Activated CD4-positive, alpha-beta T cell treated with anti-CD3 and anti-CD28 coated beads for 36 hours (primary cell): ENCODE measurements at regions of chr1 and their contacts with region 1.

Region 1: GRCh38 chr1:113072757-113073478 is at the start of gene LRIG2:
- DNase-seq: peak; percentile 99
- ATAC-seq: peak; percentile 98
- H3K4me3 Mint-ChIP-seq: peak within 1 kb of the TSS; percentile 98
- H3K27ac Mint-ChIP-seq: peak within 1 kb of the TSS; percentile 90
- H3K4me1 Mint-ChIP-seq: peaks cover 29% of the 10 kb centered on the region
- H3K27me3 Mint-ChIP-seq: no peaks in the 10 kb centered on the region
- total RNA-seq, gene LRIG2: 7.1 to 10.2 TPM

Region 2: GRCh38 chr1:112809253-112809684 is 263.6 kb before region 1 on chr1:
- CTCF ChIA-PET with region 1: interaction called, 5 read pairs
- POLR2A ChIA-PET with region 1: no interaction called
- intact Hi-C with region 1: loop called in 1 of 2 experiments (anchors 2 kb)
- DNase-seq: peak; percentile 85
- ATAC-seq: peak; percentile 93
- H3K4me3 Mint-ChIP-seq: no peak overlapping the region
- H3K27ac Mint-ChIP-seq: no peak overlapping the region
- H3K4me1 Mint-ChIP-seq: no peaks in the 10 kb centered on the region
- H3K27me3 Mint-ChIP-seq: peaks cover 5% of the 10 kb centered on the region

Region 3: GRCh38 chr1:112955781-112956543 is 117.0 kb before region 1 on chr1 and contains the start of gene SLC16A1:
- CTCF ChIA-PET with region 1: interaction called, 10 read pairs
- POLR2A ChIA-PET with region 1: interaction called, 8 read pairs
- intact Hi-C with region 1: loop called (anchors 2 kb)
- DNase-seq: peak; percentile 96
- ATAC-seq: peak; percentile 75
- H3K4me3 Mint-ChIP-seq: peak within 1 kb of the TSS; percentile 97
- H3K27ac Mint-ChIP-seq: peak within 1 kb of the TSS; percentile 100
- H3K4me1 Mint-ChIP-seq: peaks cover 56% of the 10 kb centered on the region
- H3K27me3 Mint-ChIP-seq: no peaks in the 10 kb centered on the region
- total RNA-seq, gene SLC16A1: 70.0 to 70.4 TPM

Region 4: GRCh38 chr1:113095790-113096455 is 23.0 kb after region 1 on chr1:
- CTCF ChIA-PET with region 1: interaction called, 21 read pairs
- POLR2A ChIA-PET with region 1: no interaction called
- intact Hi-C with region 1: no loop called
- DNase-seq: no peak
- ATAC-seq: no peak
- H3K4me3 Mint-ChIP-seq: no peak overlapping the region
- H3K27ac Mint-ChIP-seq: no peak overlapping the region
- H3K4me1 Mint-ChIP-seq: no peaks in the 10 kb centered on the region
- H3K27me3 Mint-ChIP-seq: no peaks in the 10 kb centered on the region

Region 5: DNA sequence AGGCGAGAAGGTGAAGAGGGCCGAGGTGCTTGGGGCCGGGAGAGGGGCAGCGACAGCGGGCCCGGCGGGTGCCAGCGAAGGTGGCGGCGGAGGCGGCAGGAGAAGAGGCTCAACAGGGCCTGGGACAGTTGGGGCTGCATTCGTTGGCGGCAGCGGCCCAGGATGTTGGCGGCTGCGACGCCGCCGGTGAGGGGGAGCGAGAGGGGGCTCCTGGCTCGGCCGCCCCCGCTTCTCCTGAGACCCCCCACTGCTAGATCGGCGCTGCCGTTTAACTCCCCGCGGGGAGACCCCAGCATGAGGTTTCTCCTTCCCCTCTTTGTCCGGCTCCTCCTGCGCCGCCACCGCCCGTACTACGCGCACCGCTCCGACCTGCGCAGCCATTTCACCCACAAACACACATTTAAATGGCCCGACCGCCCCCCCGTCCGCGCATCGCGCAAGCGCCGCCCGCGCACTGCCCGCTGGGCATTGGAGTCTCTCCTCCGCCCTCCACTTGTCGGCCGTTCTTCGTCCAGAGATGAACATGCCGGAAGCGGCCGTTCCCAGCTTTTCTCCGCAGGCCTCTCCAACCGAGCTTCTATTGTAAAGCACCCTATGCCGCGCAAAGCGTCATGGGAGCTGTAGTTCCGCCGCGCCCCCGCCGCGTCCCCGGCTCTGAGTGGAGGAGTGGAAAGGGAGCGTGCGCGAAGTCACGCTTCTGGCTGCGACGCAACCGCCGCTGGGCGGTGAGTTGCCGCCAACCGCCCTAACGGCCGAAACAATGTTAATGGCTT is 739.2 kb after region 1 on chr1 and contains the start of gene RSBN1:
- CTCF ChIA-PET with region 1: interaction called, 4 read pairs
- POLR2A ChIA-PET with region 1: interaction called, 3 read pairs
- intact Hi-C with region 1: loop called in 1 of 2 experiments (anchors 2 kb)
- DNase-seq: peak; percentile 99
- ATAC-seq: peak; percentile 97
- H3K4me3 Mint-ChIP-seq: peak within 1 kb of the TSS; percentile 97
- H3K27ac Mint-ChIP-seq: peak within 1 kb of the TSS; percentile 97
- H3K4me1 Mint-ChIP-seq: peaks cover 33% of the 10 kb centered on the region
- H3K27me3 Mint-ChIP-seq: no peaks in the 10 kb centered on the region
- total RNA-seq, gene RSBN1: 22.1 to 24.3 TPM